CD14-positive monocyte (primary cell): ENCODE measurements at regions of chr14 and their contacts with region 1.

Region 1: DNA sequence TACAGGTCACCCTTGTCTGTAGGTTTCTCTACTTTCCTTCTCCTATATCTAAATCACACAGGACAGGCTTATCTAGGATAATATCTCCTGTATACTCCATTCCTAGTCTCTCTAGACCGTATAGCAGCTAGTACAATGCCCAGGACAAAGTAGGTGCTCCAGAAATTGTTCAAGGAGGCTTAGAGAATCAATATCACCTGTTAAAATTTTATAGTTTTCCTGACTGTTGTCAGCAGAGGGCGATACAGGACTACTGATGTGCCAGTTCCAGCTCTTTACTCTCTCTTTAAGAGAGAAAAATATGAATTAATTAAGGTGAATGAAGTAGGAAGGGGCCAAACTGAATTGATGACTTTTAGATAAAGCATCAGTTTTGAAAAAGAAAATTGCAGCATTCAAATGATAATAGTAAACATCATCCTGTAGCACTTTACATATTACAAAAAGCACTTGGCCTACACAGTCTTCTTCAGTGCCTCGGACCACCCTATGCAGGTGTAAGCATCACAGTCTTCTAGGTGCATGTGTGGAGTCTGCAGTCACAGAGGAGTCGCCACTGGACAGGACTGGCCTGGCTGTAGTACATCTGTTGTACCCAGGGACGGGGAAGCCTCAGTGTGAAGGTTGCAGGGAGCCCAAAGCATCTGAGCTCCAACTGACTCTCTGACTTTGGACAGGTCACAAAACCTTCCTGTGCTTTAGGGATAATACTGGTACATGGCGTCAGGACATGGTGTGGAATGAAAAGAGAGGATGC is 61.9 kb upstream of the MAX start:
- DNase-seq: peak; percentile 19 to 50 (median 42)
- H3K4me3 ChIP-seq: no peak overlapping the region
- H3K4me3 Mint-ChIP-seq: no peak overlapping the region
- H3K27ac ChIP-seq: no peak overlapping the region
- H3K27ac Mint-ChIP-seq: peak overlapping the region in 1 of 7 donors; percentile 27
- H3K4me1 ChIP-seq: peaks cover 0 to 7% of the 10 kb centered on the region in 2 donors
- H3K4me1 Mint-ChIP-seq: peaks cover 7% of the 10 kb centered on the region
- H3K27me3 ChIP-seq: no peaks in the 10 kb centered on the region
- H3K27me3 Mint-ChIP-seq: no peaks in the 10 kb centered on the region
- CTCF ChIP-seq: peak; percentile 88

Region 2: GRCh38 chr14:65958664-65959562 is 794.7 kb after region 1 on chr14:
- intact Hi-C with region 1: loop called (anchors 5 to 10 kb)
- DNase-seq: peak in 1 of 3 donors; percentile 14
- H3K4me3 ChIP-seq: no peak overlapping the region
- H3K4me3 Mint-ChIP-seq: no peak overlapping the region
- H3K27ac ChIP-seq: no peak overlapping the region
- H3K27ac Mint-ChIP-seq: no peak overlapping the region
- H3K4me1 ChIP-seq: no peaks in the 10 kb centered on the region
- H3K4me1 Mint-ChIP-seq: peaks cover 3% of the 10 kb centered on the region
- H3K27me3 ChIP-seq: no peaks in the 10 kb centered on the region
- H3K27me3 Mint-ChIP-seq: peaks cover 0 to 3% (median 1%) of the 10 kb centered on the region in 3 donors
- CTCF ChIP-seq: peak; percentile 63

Region 3: GRCh38 chr14:66070509-66071319 is 906.5 kb after region 1 on chr14:
- intact Hi-C with region 1: loop called (anchors 5 to 10 kb)
- DNase-seq: peak in 2 of 3 donors; percentile 2 to 6
- H3K4me3 ChIP-seq: no peak overlapping the region
- H3K4me3 Mint-ChIP-seq: no peak overlapping the region
- H3K27ac ChIP-seq: no peak overlapping the region
- H3K27ac Mint-ChIP-seq: no peak overlapping the region
- H3K4me1 ChIP-seq: no peaks in the 10 kb centered on the region
- H3K4me1 Mint-ChIP-seq: no peaks in the 10 kb centered on the region
- H3K27me3 ChIP-seq: no peaks in the 10 kb centered on the region
- H3K27me3 Mint-ChIP-seq: no peaks in the 10 kb centered on the region
- CTCF ChIP-seq: peak; percentile 90